Activated CD4-positive, alpha-beta memory T cell treated with anti-CD3 and anti-CD28 coated beads for 36 hours (primary cell): ENCODE measurements at regions of chr2 and their contacts with region 1.

Region 1: GRCh38 chr2:199985625-199986207 is 30.3 kb downstream of the MAIP1 start:
- DNase-seq: peak; percentile 73
- H3K4me3 Mint-ChIP-seq: no peak overlapping the region
- H3K27ac Mint-ChIP-seq: no peak overlapping the region
- H3K4me1 Mint-ChIP-seq: peaks cover 4% of the 10 kb centered on the region
- H3K27me3 Mint-ChIP-seq: no peaks in the 10 kb centered on the region

Region 2: GRCh38 chr2:200199576-200200263 is 214.0 kb after region 1 on chr2:
- CTCF ChIA-PET with region 1: no interaction called
- POLR2A ChIA-PET with region 1: no interaction called
- intact Hi-C with region 1: loop called (anchors 10 kb)
- DNase-seq: peak; percentile 12
- H3K4me3 Mint-ChIP-seq: no peak overlapping the region
- H3K27ac Mint-ChIP-seq: no peak overlapping the region
- H3K4me1 Mint-ChIP-seq: no peaks in the 10 kb centered on the region
- H3K27me3 Mint-ChIP-seq: peaks cover 4% of the 10 kb centered on the region

Region 3: DNA sequence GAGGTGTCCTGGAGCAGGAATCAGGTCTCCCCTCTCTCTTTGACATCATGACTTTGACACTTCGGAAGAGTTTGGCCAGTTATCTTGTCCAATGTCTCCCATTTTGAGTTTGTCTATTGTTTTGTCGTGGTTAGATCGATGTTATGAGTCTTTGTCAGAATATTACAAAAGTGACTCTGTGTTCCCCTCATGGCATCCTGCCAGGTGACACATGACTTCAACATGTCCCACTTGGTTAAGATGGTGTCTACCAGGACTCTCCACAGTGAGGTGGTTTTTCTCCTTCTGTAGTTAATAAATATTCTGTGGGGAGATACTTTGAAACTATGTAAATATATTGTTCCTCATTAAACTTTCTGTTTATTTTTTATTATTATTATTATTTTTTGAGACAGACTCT is 749.3 kb after region 1 on chr2:
- CTCF ChIA-PET with region 1: no interaction called
- POLR2A ChIA-PET with region 1: no interaction called
- intact Hi-C with region 1: loop called (anchors 5 kb)
- DNase-seq: peak; percentile 53
- H3K4me3 Mint-ChIP-seq: no peak overlapping the region
- H3K27ac Mint-ChIP-seq: no peak overlapping the region
- H3K4me1 Mint-ChIP-seq: peaks cover 12% of the 10 kb centered on the region
- H3K27me3 Mint-ChIP-seq: peaks cover 4% of the 10 kb centered on the region